ENCODE measurements at regions of chr17 and their contacts with region 1.

Region 1: DNA sequence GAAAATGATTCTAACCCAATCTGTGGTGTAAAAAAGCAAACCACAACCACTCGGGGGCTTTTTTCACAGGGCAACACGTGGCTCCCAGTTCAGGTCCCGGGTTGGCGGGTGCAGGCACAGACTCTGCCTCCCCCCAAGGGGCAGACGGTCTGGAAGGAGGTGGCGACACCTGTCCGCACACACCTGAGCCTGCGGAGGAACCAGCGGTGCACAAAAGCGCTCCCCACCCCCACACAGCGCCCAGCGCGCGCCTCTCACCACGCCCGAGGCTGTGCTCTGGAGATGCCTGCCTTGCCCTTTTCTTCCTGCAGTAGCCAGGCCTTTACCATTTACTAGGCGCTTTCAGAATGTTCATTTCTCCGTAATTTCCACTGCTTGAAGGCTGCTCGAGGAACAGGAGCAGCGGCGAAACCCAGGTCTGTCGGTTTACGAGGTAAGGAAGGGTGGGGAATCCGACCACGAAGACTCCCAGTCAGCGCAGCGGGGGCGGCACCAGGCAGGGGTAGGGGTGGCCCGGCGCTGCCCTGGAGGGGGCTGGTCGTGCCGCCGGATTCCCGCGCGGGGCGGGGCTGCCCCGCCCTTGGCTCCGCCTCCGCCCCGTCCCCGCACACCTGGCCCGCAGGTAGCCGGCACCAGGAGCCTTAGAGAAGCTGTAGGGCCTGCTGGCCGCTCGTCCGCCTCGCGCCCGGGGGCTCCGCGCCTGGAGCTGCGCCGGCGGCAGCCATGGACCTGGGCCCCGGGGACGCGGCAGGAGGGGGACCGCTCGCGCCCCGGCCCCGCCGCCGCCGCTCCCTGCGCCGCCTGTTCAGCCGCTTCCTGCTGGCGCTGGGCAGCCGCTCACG is at the start of gene USP43:
- DNase-seq: peak; percentile 72
- H3K4me3 Mint-ChIP-seq: peak within 1 kb of the TSS; percentile 75
- H3K27ac Mint-ChIP-seq: peak within 1 kb of the TSS; percentile 83
- H3K4me1 Mint-ChIP-seq: peaks cover 20% of the 10 kb centered on the region
- H3K27me3 Mint-ChIP-seq: no peaks in the 10 kb centered on the region
- CTCF ChIP-seq: no peak
- total RNA-seq, gene USP43: 1.9 and 3.2 TPM in 2 replicates

Region 2: DNA sequence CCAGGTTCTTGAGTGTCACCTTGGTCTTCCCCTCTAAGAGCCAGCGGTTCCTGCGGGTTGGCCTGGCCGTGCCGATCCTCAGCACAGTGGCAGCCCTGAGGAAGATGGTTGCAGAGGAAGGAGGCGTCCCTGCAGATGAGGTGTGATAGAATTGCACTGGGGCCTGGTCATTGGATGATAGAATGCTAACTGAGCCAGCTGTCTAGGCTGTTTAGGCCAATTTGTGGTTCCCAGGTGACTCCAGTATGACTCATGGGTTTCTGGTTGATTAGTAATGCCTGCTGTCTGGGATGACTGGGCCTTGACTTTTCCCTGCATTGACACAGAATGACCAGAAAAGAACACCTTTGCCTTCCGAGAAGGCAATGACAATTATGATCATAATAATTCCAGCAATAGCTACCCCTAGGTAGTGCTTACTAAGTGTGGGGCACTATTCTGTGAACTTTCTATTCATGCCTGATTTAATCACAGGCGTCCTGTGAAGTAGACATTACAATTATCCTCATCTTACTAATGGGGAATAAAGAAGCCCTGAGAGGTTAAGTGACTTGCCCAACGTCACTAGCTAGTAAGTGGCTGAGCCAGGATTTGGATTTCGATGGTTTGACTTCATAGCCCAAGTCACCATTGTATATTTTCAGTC is 31.7 kb after region 1 on chr17:
- CTCF ChIA-PET with region 1: interaction called, 9 read pairs
- POLR2A ChIA-PET with region 1: interaction called, 17 read pairs
- intact Hi-C with region 1: loop called (anchors 1 kb)
- DNase-seq: peak; percentile 97
- H3K4me3 Mint-ChIP-seq: no peak overlapping the region
- H3K27ac Mint-ChIP-seq: peak overlapping the region; percentile 88
- H3K4me1 Mint-ChIP-seq: peaks cover 18% of the 10 kb centered on the region
- H3K27me3 Mint-ChIP-seq: no peaks in the 10 kb centered on the region
- CTCF ChIP-seq: no peak

Measured in MCF 10A (cell line).